ENCODE measurements at regions of chr9 and their contacts with region 1.

Region 1: DNA sequence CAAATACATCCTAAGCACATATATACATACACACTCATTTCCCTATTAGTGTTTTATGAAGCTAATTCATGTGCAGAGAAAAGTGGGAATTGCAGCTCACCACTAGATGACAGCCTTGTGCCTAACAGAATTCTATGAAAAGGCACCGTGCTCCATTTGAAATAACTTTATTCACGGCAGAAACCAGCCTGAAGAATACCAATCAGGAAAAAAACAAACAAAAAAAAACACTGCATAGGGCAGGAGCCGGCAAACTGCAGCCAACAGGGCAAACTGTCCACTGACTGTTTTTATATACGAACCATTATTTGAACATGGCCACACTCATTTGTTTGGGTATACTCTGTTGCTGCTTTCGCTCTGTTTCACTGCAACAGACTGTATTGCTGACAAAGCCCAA is 33.6 kb downstream of the ERMP1 start:
- DNase-seq: peak in 4 of 14 experiments; percentile 14 to 40 (median 30)
- ATAC-seq: no peak
- H3K4me3 ChIP-seq: no peak overlapping the region
- H3K4me3 Mint-ChIP-seq: no peak overlapping the region
- H3K27ac ChIP-seq: no peak overlapping the region
- H3K27ac Mint-ChIP-seq: no peak overlapping the region
- H3K4me1 ChIP-seq: no peaks in the 10 kb centered on the region
- H3K4me1 Mint-ChIP-seq: peaks cover 16% of the 10 kb centered on the region
- H3K27me3 ChIP-seq: no peaks in the 10 kb centered on the region
- H3K27me3 Mint-ChIP-seq: no peaks in the 10 kb centered on the region
- CTCF ChIP-seq: peak; percentile 52

Region 2: DNA sequence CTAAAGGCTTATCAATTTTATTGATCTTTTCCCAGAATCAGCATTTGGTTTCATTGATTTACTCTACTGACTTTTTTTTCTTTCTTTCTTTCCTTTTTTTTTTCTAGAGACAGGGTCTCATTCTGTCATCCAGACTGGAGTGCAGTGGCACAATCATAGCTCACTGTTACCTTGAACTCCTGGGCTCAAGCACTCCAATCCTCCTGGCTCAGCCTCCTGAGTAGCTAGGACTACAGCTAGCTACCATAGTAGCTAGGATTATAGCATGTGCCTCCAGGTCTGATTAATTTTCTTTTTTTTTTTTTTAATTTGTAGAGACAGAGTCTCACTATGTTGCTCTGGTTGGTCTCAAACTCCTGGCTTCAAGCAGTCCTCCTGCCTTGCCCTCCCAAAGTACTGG is 103.1 kb after region 1 on chr9:
- CTCF ChIA-PET with region 1: no interaction called
- POLR2A ChIA-PET with region 1: no interaction called
- intact Hi-C with region 1: loop called in 1 of 2 experiments (anchors 2 kb)
- DNase-seq: no peak
- ATAC-seq: no peak
- H3K4me3 ChIP-seq: no peak overlapping the region
- H3K4me3 Mint-ChIP-seq: no peak overlapping the region
- H3K27ac ChIP-seq: no peak overlapping the region
- H3K27ac Mint-ChIP-seq: no peak overlapping the region
- H3K4me1 ChIP-seq: no peaks in the 10 kb centered on the region
- H3K4me1 Mint-ChIP-seq: no peaks in the 10 kb centered on the region
- H3K27me3 ChIP-seq: no peaks in the 10 kb centered on the region
- H3K27me3 Mint-ChIP-seq: no peaks in the 10 kb centered on the region
- CTCF ChIP-seq: no peak

Region 3: DNA sequence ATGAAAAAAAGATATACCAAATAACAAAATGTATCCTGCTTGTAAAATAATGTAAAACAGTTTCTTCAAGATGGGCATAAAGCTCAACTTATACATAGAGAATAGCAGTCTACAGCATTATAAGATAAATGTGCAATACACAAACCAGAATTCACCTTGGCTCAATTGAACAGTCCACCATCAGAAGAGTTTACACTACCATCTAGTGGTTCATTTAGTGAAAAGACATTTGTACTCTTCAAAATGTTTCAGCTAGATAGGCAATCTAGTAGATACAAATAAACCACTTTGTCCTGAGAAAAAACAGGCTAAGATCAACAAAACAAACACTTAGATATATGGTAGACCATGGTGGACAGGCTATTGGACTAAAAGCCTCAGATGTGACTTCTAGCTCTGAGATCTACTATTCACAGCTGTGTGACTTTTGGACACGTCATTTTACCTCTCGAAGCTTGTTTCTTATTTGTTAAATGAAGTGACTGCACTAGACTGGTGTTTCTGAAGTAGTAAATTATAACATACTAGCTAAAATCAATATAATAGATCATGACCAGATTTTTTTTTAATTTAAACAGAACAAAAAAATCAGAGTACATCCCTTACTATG is 506.7 kb after region 1 on chr9:
- CTCF ChIA-PET with region 1: no interaction called
- POLR2A ChIA-PET with region 1: no interaction called
- intact Hi-C with region 1: loop called in 1 of 2 experiments (anchors 10 kb)
- DNase-seq: peak in 3 of 14 experiments; percentile 9 to 35 (median 32)
- ATAC-seq: no peak
- H3K4me3 ChIP-seq: no peak overlapping the region
- H3K4me3 Mint-ChIP-seq: no peak overlapping the region
- H3K27ac ChIP-seq: no peak overlapping the region
- H3K27ac Mint-ChIP-seq: no peak overlapping the region
- H3K4me1 ChIP-seq: no peaks in the 10 kb centered on the region
- H3K4me1 Mint-ChIP-seq: no peaks in the 10 kb centered on the region
- H3K27me3 ChIP-seq: peaks cover 3 to 20% of the 10 kb centered on the region in 2 experiments
- H3K27me3 Mint-ChIP-seq: peaks cover 16% of the 10 kb centered on the region
- CTCF ChIP-seq: no peak

Region 4: DNA sequence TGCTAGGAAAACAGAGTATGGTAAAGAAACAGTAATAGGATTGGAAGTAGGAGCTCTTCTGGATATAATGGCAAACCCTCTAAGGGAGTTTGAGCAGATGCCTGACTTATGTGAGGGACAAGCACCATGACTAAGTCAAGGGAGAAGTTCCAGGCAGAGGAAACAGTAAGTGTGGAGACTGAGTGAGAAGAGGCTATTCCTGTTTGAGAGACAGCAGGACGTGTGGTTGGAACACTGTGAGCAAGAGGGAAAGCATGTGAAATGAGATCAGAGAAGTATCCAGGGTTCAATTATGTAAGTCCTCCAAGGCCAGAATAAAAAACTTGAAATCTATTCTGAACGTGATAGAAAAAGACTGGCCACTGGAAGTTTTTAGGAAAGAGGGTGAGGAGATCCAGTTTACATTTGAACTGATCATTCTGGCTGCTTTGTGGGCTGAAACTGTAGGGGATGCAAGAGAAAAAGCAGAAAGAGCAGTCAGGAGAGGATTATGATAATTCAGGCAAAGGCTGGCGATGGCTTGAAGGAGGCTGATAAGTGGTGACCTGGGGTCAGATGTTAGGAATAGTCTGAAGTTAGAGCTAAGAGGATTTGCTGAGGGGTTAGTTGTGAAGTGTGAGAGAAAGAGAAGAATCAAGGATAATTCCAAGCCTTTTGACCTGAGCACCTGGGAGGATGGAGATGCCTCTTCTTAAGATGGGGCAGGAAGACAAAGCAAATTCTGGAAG is 1981.1 kb after region 1 on chr9:
- CTCF ChIA-PET with region 1: no interaction called
- POLR2A ChIA-PET with region 1: no interaction called
- intact Hi-C with region 1: no loop called
- DNase-seq: no peak
- ATAC-seq: no peak
- H3K4me3 ChIP-seq: no peak overlapping the region
- H3K4me3 Mint-ChIP-seq: no peak overlapping the region
- H3K27ac ChIP-seq: no peak overlapping the region
- H3K27ac Mint-ChIP-seq: no peak overlapping the region
- H3K4me1 ChIP-seq: peaks cover 4% of the 10 kb centered on the region
- H3K4me1 Mint-ChIP-seq: no peaks in the 10 kb centered on the region
- H3K27me3 ChIP-seq: no peaks in the 10 kb centered on the region
- H3K27me3 Mint-ChIP-seq: no peaks in the 10 kb centered on the region
- CTCF ChIP-seq: no peak